ENCODE measurements at regions of chr3 and their contacts with region 1.

Region 1: GRCh38 chr3:81105789-81106488 is 655.5 kb downstream of the GBE1 start:
- DNase-seq: no peak

Region 2: DNA sequence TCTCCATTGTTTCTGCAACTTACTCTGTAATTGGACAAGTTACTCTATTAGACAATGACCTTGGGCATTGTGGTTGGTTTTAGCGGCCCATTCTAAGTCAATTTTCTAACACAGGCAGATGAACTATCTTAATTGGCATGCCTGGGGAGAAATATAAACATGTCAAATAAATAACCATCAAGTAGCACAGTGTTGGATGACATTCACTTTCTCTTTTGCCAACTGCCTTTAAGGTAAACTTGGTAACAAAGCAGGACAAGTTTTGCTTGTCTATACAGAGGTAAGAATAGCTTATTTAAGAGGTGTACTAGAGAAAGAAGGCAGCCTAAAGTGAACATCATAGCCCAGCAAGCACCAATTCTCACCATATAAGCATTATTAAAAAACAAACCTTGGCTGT is 55.9 kb after region 1 on chr3:
- intact Hi-C with region 1: loop called in 1 of 2 experiments (anchors 2 kb)
- DNase-seq: no peak

Region 3: DNA sequence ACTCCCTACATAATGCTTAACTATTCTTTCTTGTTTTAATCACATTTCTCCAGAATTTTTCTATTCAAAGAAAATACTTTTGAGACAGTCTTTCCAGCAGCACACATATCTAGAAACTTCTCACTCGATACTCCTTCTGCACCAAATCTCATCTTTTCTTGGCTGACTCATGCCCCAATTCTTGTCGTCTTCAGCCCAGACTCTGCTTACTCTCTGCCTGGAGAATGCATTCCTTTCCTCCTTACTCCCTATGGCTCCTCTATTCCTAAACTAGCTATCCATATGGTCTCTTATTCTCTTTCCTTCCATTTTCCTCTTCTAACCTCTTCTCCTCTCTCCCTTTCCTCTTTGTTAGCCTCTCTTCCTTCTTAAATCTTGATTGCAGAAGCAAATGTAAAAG is 496.8 kb after region 1 on chr3:
- intact Hi-C with region 1: no loop called
- DNase-seq: no peak